ENCODE measurements at regions of chrX and their contacts with region 1.

Region 1: DNA sequence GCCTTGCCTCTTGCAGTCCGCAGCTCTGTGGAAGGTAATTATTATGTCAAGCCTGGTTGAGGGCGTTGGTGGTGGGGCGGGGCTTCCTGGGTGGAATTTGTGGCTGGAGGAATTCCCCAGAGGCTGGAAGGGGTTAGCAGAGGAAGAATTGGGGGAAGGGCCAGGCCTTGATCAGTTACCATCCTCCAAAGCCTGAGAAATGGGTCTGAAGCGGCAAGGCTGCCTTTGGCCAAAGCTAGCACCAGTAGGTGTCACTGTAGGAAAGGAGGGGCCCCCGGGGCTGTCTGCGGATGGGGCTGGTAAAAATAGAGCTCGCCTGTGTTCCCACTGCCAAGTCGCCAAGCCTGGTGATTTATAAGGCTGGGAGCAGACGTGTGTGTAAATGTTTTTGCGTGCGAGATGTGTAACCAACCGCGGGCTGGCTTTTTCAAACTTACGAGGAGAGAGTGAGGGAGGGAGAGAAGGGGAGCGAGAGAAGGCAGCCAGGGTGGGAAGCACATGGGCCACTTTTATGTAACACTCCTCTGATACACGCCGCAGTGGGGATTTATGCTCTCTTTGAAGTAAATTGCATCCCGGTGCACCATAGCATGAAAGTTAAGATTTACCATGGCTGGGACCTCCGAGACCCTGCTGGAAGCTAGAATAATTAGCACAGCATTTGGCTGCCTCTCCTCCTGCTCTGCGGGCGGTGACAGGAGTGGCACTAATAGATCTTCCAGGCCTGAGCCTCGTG is 366.9 kb downstream of the BCOR start:
- DNase-seq: peak; percentile 72 to 82 (median 75)
- H3K4me3 ChIP-seq: no peak overlapping the region
- H3K27ac ChIP-seq: no peak overlapping the region
- H3K4me1 ChIP-seq: peaks cover 2% of the 10 kb centered on the region
- H3K27me3 ChIP-seq: no peaks in the 10 kb centered on the region
- CTCF ChIP-seq: peak in 2 of 3 donors; percentile 32 to 59
- EP300 ChIP-seq: no peak
- POLR2A ChIP-seq: no peak

Region 2: GRCh38 chrX:39782276-39782675 is 51.4 kb after region 1 on chrX:
- intact Hi-C with region 1: no loop called
- DNase-seq: no peak
- H3K4me3 ChIP-seq: no peak overlapping the region
- H3K27ac ChIP-seq: no peak overlapping the region
- H3K4me1 ChIP-seq: no peaks in the 10 kb centered on the region
- H3K27me3 ChIP-seq: no peaks in the 10 kb centered on the region
- CTCF ChIP-seq: no peak
- EP300 ChIP-seq: no peak
- POLR2A ChIP-seq: no peak

Region 3: GRCh38 chrX:40097497-40098263 is 366.9 kb after region 1 on chrX and contains the start of gene BCOR:
- intact Hi-C with region 1: loop called in 1 of 4 experiments (anchors 5 kb)
- DNase-seq: peak; percentile 77 to 83 (median 77)
- H3K4me3 ChIP-seq: peak within 1 kb of the TSS; percentile 52
- H3K27ac ChIP-seq: peak within 1 kb of the TSS; percentile 78 to 86
- H3K4me1 ChIP-seq: peaks cover 2% of the 10 kb centered on the region
- H3K27me3 ChIP-seq: no peaks in the 10 kb centered on the region
- CTCF ChIP-seq: peak in 1 of 3 donors; percentile 9
- EP300 ChIP-seq: no peak
- POLR2A ChIP-seq: peak; percentile 79
- total RNA-seq, gene BCOR: 25.0 to 57.2 (median 43.2) TPM

Region 4: GRCh38 chrX:40153335-40154249 is 422.8 kb after region 1 on chrX:
- intact Hi-C with region 1: loop called in 2 of 4 experiments (anchors 10 kb)
- DNase-seq: peak; percentile 51 to 74 (median 71)
- H3K4me3 ChIP-seq: peak overlapping the region; percentile 37
- H3K27ac ChIP-seq: peak overlapping the region; percentile 29 to 86
- H3K4me1 ChIP-seq: no peaks in the 10 kb centered on the region
- H3K27me3 ChIP-seq: no peaks in the 10 kb centered on the region
- CTCF ChIP-seq: no peak
- EP300 ChIP-seq: no peak
- POLR2A ChIP-seq: no peak

Region 5: GRCh38 chrX:40314070-40314469 is 583.2 kb after region 1 on chrX:
- intact Hi-C with region 1: no loop called
- DNase-seq: no peak
- H3K4me3 ChIP-seq: no peak overlapping the region
- H3K27ac ChIP-seq: no peak overlapping the region
- H3K4me1 ChIP-seq: peaks cover 1% of the 10 kb centered on the region
- H3K27me3 ChIP-seq: no peaks in the 10 kb centered on the region
- CTCF ChIP-seq: no peak
- EP300 ChIP-seq: no peak
- POLR2A ChIP-seq: no peak